CD8-positive, alpha-beta memory T cell (primary cell): ENCODE measurements at regions of chr2 and their contacts with region 1.

Region 1: DNA sequence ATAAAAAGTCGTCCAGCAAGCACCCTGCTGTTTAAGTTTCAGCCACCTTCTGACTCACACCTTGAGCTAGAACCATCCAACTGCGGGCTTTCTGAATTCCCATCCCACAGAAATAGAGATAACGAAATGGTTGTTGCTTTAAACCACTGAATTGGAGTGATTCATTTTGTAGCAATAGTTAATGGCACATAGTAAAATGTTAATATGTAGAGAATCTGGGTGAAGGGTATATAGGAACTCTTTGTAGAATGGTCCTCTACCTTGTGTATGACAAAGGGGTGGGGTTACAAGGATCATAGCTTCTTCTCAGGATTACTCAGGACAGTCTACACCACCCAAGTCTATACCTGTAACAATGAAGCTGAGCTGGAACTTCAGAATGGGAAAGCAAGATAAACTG is 2.4 kb upstream of the MAPRE3 start:
- DNase-seq: no peak
- H3K4me3 ChIP-seq: no peak overlapping the region
- H3K4me3 Mint-ChIP-seq: peak overlapping the region in 2 of 7 donors; percentile 46 to 89
- H3K27ac ChIP-seq: no peak overlapping the region
- H3K27ac Mint-ChIP-seq: peak overlapping the region in 2 of 8 donors; percentile 51 to 95
- H3K4me1 ChIP-seq: peaks cover 7% of the 10 kb centered on the region
- H3K4me1 Mint-ChIP-seq: peaks cover 18 to 27% (median 21%) of the 10 kb centered on the region in 3 donors
- H3K27me3 ChIP-seq: peaks cover 8% of the 10 kb centered on the region
- H3K27me3 Mint-ChIP-seq: peaks cover 27 to 33% of the 10 kb centered on the region in 2 donors

Region 2: GRCh38 chr2:27016801-27017325 is 48.9 kb after region 1 on chr2:
- CTCF ChIA-PET with region 1: interaction called, 27 read pairs
- POLR2A ChIA-PET with region 1: interaction called, 3 read pairs
- DNase-seq: peak in 3 of 5 donors; percentile 5 to 53 (median 33)
- H3K4me3 ChIP-seq: no peak overlapping the region
- H3K4me3 Mint-ChIP-seq: no peak overlapping the region
- H3K27ac ChIP-seq: no peak overlapping the region
- H3K27ac Mint-ChIP-seq: no peak overlapping the region
- H3K4me1 ChIP-seq: no peaks in the 10 kb centered on the region
- H3K4me1 Mint-ChIP-seq: no peaks in the 10 kb centered on the region
- H3K27me3 ChIP-seq: no peaks in the 10 kb centered on the region
- H3K27me3 Mint-ChIP-seq: peaks cover 0 to 4% of the 10 kb centered on the region in 2 donors